MCF 10A (cell line): ENCODE measurements at regions of chr9 and their contacts with region 1.

Region 1: GRCh38 chr9:79571309-79572031 is at the start of gene TLE4:
- DNase-seq: peak; percentile 99
- H3K4me3 Mint-ChIP-seq: no peak within 1 kb of the TSS
- H3K27ac Mint-ChIP-seq: no peak within 1 kb of the TSS
- H3K4me1 Mint-ChIP-seq: peaks cover 17% of the 10 kb centered on the region
- H3K27me3 Mint-ChIP-seq: no peaks in the 10 kb centered on the region
- CTCF ChIP-seq: no peak
- total RNA-seq, gene TLE4: 8.7 and 12.3 TPM in 2 replicates

Region 2: DNA sequence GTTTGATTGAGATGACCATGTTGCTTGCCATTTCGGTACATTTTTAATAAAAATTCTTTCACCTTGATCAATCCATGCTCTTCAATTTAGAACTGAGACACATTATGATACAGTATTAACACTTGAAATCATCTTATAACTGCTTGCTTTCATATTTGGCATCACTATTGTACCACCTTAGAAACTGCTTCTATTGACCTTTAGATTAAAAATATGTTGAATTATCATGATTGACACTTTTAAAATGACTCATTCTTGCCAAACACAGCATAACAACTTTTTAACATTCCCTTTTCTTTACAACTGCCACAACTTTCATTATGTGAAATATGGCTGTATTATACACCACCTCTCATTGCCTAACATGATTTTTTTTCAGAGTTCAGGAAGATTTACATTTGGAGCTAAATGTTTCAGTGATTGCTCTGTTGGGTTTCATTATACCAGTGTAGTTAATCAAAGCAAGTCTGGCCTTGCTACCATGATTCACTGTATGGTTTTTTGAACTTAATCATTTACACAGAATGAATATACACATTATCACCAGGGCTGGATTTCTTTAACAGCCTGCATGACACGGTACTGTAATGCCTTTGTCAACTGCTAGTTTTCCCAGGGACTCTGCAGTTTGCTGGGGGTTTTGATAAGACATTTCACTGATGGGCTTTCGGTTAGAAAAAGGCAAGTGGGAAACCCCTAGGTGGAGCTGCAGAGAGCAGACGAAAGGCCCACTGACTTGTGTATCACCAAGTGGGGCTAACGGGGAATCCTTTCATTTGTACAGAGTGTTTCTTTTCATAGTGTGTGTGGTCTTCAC is 93.3 kb before region 1 on chr9:
- CTCF ChIA-PET with region 1: interaction called, 3 read pairs
- POLR2A ChIA-PET with region 1: interaction called, 11 read pairs
- intact Hi-C with region 1: loop called (anchors 10 kb)
- DNase-seq: peak; percentile 24
- H3K4me3 Mint-ChIP-seq: no peak overlapping the region
- H3K27ac Mint-ChIP-seq: no peak overlapping the region
- H3K4me1 Mint-ChIP-seq: peaks cover 8% of the 10 kb centered on the region
- H3K27me3 Mint-ChIP-seq: no peaks in the 10 kb centered on the region
- CTCF ChIP-seq: no peak

Region 3: GRCh38 chr9:79489247-79489985 is 82.1 kb before region 1 on chr9:
- CTCF ChIA-PET with region 1: no interaction called
- POLR2A ChIA-PET with region 1: interaction called, 7 read pairs
- intact Hi-C with region 1: loop called (anchors 10 kb)
- DNase-seq: peak; percentile 51
- H3K4me3 Mint-ChIP-seq: peak overlapping the region; percentile 39
- H3K27ac Mint-ChIP-seq: peak overlapping the region; percentile 47
- H3K4me1 Mint-ChIP-seq: peaks cover 21% of the 10 kb centered on the region
- H3K27me3 Mint-ChIP-seq: no peaks in the 10 kb centered on the region
- CTCF ChIP-seq: no peak

Region 4: DNA sequence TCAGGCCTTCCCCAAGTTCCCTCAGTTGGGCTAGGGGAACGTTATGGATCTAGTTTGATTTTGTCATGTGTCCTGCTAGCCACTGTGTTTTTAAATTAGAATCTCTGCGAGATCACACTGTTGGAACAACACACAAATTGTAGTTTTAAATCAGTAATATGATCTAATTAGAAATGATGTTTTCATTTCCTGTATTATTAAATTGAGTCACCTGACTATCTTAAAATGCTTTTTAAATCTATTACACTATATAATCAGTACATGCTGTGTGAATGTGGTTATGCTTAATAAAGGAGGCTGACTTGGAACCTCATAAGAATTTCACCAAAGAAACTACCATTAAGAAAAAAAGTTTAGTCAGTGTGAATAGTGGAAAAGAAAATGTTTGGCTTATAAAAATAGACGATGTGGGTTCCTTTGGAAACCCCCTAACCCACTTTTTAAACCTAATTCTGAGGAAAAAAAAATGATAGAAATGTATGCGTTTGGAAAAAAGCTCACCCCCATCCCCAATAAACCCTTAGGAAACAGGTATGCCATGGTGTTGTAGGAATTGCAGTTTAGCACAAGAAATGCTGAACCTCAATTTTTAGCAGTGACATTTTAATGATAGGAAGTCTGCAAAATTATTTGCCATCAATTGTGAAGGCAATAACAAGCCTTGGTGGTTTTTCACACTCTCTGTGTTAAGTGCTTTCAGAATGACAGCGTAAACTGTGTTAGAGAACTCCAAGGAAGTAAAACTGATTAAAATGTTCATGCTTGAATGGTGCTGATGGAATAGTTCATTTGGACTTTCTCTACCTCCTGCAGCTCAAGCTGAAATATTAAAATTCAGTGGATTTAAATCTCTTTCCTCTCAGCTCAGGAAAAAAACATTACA is 59.3 kb after region 1 on chr9:
- CTCF ChIA-PET with region 1: no interaction called
- POLR2A ChIA-PET with region 1: no interaction called
- intact Hi-C with region 1: no loop called
- DNase-seq: no peak
- H3K4me3 Mint-ChIP-seq: no peak overlapping the region
- H3K27ac Mint-ChIP-seq: no peak overlapping the region
- H3K4me1 Mint-ChIP-seq: no peaks in the 10 kb centered on the region
- H3K27me3 Mint-ChIP-seq: no peaks in the 10 kb centered on the region
- CTCF ChIP-seq: no peak

Region 5: GRCh38 chr9:79673614-79674013 is 102.1 kb after region 1 on chr9:
- CTCF ChIA-PET with region 1: interaction called, 3 read pairs
- POLR2A ChIA-PET with region 1: interaction called, 11 read pairs
- intact Hi-C with region 1: loop called (anchors 10 kb)
- DNase-seq: no peak
- H3K4me3 Mint-ChIP-seq: no peak overlapping the region
- H3K27ac Mint-ChIP-seq: no peak overlapping the region
- H3K4me1 Mint-ChIP-seq: peaks cover 19% of the 10 kb centered on the region
- H3K27me3 Mint-ChIP-seq: no peaks in the 10 kb centered on the region
- CTCF ChIP-seq: no peak